ENCODE measurements at regions of chr22 and their contacts with region 1.

Region 1: GRCh38 chr22:37229805-37230672 is 14.0 kb downstream of the RAC2 start:
- DNase-seq: peak; percentile 88
- CTCF ChIP-seq: no peak

Region 2: DNA sequence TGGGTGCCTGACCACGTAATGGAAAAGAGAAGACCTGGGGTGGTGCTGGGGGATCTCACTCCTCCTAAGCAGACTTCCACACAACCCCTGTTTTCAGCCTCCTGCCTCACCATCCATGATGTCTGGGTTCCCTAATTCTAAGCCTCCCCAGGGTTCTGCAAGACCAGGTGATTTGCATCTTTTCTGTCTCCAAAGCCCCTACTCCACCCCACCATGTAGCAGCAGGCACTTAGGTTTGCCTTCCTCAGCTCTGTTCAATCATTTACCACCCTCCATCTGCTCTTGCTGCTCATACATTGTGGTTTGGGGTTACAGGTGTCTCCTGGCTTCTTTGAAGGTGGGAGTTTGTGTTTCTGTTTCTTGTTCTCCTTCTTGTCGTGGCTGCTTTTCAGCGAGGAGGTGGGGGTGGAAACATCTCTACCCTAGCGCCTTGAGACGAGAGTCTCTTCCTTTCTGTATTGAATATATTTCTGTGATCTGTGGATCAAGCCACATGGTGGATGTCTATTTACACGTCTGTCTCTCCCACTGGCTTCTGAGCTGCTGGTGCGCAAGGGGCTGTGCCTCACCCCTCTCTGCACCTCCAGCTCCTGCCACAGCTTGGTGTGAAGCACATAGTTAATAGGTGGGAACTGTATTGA is 11.1 kb before region 1 on chr22:
- CTCF ChIA-PET with region 1: interaction called, 21 read pairs
- POLR2A ChIA-PET with region 1: interaction called, 5 read pairs
- DNase-seq: peak; percentile 85
- CTCF ChIP-seq: no peak

Region 3: DNA sequence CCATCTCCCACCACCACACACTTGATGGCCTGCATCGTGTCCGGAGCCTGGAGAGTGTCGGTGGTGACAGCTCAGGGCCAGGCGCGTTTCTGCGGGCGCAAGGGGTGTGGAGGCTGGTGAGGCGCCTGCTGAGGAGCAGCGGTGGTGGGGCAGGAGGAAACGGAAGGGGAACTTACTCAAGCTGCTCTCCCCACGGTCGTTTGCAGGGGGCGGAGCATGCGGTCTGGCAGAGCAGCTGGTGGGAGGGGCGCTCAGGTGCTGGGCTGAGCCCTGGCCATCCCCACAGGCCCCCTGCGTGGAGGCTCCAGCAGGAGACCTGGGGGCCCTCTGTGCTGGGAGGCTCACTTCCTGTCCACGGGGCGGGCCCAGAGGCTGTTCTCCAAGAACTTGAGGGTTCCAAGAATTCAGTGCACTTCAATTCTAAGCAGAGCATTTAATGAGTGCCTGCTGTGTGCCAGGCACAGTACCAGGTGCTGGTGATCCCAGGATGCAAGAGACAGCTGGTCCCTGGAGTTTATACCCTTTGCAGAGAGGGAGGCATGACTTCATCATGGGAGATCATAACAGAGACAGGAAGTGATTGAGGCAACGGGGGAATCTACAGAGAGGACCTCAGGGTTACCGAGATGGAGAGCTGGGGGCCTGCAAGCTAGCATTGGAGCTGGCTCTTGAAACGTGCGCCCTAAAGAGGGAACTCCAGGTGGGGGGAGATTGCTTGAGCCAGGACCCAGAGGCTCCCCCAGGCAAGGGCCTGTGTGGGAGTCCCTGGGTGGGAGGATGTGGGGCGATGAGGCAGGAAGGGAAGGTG is 14.3 kb after region 1 on chr22 and contains the start of gene RAC2:
- CTCF ChIA-PET with region 1: interaction called, 45 read pairs
- POLR2A ChIA-PET with region 1: interaction called, 13 read pairs
- DNase-seq: peak; percentile 88
- CTCF ChIP-seq: no peak

Region 4: GRCh38 chr22:37267135-37267587 is 37.1 kb after region 1 on chr22:
- CTCF ChIA-PET with region 1: interaction called, 21 read pairs
- POLR2A ChIA-PET with region 1: no interaction called
- DNase-seq: peak; percentile 83
- CTCF ChIP-seq: peak; percentile 97

Measured in GM10248 (cell line).